Activated naive CD4-positive, alpha-beta T cell treated with anti-CD3 and anti-CD28 coated beads for 36 hours (primary cell): ENCODE measurements at regions of chr2 and their contacts with region 1.

Region 1: DNA sequence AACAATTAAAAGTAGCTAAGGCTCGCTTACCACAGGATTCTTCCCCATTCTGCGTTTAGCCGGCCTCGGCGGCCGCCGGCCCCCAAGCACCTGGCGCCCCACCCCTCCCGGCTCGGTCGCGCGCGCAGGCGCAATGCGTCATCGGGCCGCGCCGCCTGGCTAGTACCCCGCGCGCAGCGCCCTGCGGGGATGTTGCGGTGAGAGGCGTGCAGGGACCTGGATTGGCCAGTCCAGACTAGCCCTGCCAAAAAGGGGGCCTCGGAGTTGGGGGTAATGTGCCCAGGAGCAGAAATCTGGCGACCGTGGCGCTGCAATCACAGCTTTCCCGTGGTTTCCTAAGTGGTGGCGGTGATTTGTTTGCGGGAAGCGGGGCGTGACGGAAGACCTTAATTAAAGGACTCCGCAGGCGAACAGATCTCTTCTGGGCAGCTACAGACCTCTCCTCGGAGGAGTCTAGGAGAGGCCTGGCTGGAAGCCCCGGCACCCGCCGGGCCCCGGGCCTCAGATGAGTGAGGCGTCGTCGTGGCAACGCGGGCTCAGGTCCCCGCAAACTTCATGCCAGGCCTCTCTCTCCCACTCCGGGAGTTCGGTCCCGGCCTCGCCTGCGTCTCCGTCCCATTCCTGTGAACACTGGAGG is 606 bp downstream of the TMEM237 start:
- DNase-seq: peak; percentile 87
- H3K4me3 Mint-ChIP-seq: peak overlapping the region; percentile 79
- H3K27ac Mint-ChIP-seq: peak overlapping the region; percentile 79
- H3K4me1 Mint-ChIP-seq: peaks cover 11% of the 10 kb centered on the region
- H3K27me3 Mint-ChIP-seq: no peaks in the 10 kb centered on the region

Region 2: GRCh38 chr2:200703127-200703925 is 939.4 kb before region 1 on chr2:
- CTCF ChIA-PET with region 1: no interaction called
- intact Hi-C with region 1: no loop called
- DNase-seq: peak; percentile 68
- H3K4me3 Mint-ChIP-seq: peak overlapping the region; percentile 19
- H3K27ac Mint-ChIP-seq: peak overlapping the region; percentile 83
- H3K4me1 Mint-ChIP-seq: peaks cover 55% of the 10 kb centered on the region
- H3K27me3 Mint-ChIP-seq: peaks cover 1% of the 10 kb centered on the region

Region 3: DNA sequence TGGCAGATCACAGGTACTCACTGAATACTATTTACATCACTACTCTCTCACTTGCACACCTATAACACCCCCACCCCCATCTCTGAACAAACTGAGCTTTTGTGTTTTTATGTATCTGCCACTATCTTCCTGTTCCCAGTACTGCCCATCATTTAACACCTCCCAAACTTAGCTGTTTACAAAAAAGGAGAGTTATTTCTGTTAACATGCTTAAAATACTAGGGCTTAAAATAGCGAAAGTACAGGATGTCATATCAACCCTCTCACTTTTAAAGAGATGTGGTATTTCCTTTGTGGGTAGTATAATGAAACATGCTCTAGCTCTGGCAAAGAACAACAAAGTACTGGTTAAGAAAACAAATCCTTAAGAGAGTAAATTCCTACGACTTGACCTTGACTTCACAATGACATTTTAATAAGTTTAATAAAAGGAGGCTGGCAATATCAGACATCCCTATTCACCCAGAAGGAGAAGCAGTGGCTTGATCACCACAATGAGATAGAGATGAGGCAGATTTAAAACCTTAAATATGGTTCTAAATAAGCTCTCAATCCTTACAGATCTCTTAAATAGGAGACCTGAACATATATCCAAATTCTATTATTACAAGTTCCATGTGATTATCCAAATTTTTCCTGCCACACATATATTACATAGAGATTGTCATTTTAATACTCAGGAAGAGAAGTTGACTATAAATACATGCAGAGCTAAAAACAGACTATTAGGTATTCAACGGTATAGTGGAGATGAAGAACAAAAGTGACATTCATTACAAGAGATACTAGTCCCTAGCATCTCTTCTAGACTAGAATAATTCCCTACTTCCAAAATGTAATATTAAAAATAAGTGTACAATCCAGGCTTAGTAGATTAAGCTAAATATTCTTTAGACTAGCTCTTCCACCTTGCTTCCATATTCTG is 228.3 kb before region 1 on chr2:
- CTCF ChIA-PET with region 1: no interaction called
- intact Hi-C with region 1: loop called (anchors 2 kb)
- DNase-seq: peak; percentile 9
- H3K4me3 Mint-ChIP-seq: no peak overlapping the region
- H3K27ac Mint-ChIP-seq: no peak overlapping the region
- H3K4me1 Mint-ChIP-seq: peaks cover 23% of the 10 kb centered on the region
- H3K27me3 Mint-ChIP-seq: no peaks in the 10 kb centered on the region

Region 4: DNA sequence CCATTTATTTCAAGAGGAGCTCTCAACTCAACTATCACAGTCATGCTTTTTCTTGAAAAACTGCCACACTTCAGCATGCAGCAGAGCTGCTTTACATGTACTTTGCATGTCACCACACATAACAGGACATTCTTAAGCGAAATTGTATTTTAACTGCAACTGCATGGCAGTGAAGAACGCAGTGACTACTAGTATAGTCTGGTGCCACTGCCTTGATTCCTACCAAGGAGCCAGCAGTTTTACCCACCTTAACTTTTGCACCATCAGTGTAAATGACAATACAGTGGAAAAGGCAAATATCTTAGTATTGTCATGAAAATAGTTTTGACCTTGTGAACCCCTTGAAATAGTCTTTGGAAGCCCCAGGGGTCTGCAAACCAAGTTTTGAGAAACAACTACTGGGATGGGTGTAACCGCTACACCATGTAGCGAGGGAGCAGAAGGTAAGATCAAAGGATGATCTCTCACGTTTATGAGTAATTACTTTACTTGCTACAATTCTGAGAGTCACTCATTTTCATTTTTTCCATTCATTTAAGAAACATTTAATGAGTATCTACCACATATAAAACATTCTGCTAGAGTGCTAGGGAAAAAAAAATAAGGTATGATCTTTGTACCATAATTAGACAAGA is 88.1 kb after region 1 on chr2:
- CTCF ChIA-PET with region 1: no interaction called
- intact Hi-C with region 1: loop called (anchors 2 kb)
- DNase-seq: peak; percentile 41
- H3K4me3 Mint-ChIP-seq: no peak overlapping the region
- H3K27ac Mint-ChIP-seq: peak overlapping the region; percentile 30
- H3K4me1 Mint-ChIP-seq: peaks cover 11% of the 10 kb centered on the region
- H3K27me3 Mint-ChIP-seq: no peaks in the 10 kb centered on the region

Region 5: GRCh38 chr2:201780674-201781581 is 138.2 kb after region 1 on chr2 and contains the start of gene ALS2:
- CTCF ChIA-PET with region 1: no interaction called
- intact Hi-C with region 1: loop called (anchors 1 kb)
- DNase-seq: peak; percentile 96
- H3K4me3 Mint-ChIP-seq: peak within 1 kb of the TSS; percentile 86
- H3K27ac Mint-ChIP-seq: peak within 1 kb of the TSS; percentile 83
- H3K4me1 Mint-ChIP-seq: peaks cover 13% of the 10 kb centered on the region
- H3K27me3 Mint-ChIP-seq: peaks cover 3% of the 10 kb centered on the region
- total RNA-seq, gene ALS2: 9.4 to 11.2 TPM